ENCODE measurements at regions of chr13 and their contacts with region 1.

Region 1: DNA sequence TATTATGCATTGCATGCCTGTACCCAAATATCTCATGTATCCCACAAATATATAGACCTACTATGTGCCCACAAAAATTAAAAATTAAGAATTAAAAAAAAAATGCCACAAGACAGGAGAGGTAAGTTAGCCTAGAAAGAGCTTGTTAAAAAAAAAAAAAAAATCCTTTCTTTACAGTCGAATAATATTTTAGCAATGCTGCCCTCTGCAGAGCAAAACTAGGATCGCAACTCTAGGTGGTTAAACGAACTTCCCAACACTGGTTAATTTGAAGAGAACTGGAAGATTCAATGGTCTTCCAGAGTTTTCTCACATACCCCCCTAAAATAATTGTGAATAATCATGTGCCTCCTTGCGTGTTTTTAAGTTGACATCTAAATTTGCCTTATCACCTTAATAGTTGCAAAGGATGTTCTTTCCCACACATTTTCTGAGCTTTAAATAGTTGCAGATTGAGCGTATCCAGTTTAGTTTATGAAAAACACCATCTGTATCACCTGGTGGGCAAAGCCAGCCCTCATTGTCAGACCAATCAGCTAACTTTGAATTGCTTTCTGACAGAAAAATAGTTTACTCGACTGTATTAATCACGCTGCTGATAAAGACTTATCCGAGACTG is 47.4 kb upstream of the RCBTB2 start:
- DNase-seq: peak; percentile 60
- H3K4me3 ChIP-seq: no peak overlapping the region
- H3K27ac ChIP-seq: peak overlapping the region; percentile 52
- H3K4me1 ChIP-seq: peaks cover 34% of the 10 kb centered on the region
- H3K27me3 ChIP-seq: no peaks in the 10 kb centered on the region
- CTCF ChIP-seq: peak; percentile 83

Region 2: GRCh38 chr13:47764817-47765216 is 815.5 kb before region 1 on chr13:
- intact Hi-C with region 1: no loop called
- DNase-seq: no peak
- H3K4me3 ChIP-seq: no peak overlapping the region
- H3K27ac ChIP-seq: no peak overlapping the region
- H3K4me1 ChIP-seq: no peaks in the 10 kb centered on the region
- H3K27me3 ChIP-seq: no peaks in the 10 kb centered on the region
- CTCF ChIP-seq: no peak

Region 3: GRCh38 chr13:48110931-48111721 is 469.2 kb before region 1 on chr13:
- intact Hi-C with region 1: loop called (anchors 10 kb)
- DNase-seq: peak; percentile 52
- H3K4me3 ChIP-seq: peak overlapping the region; percentile 26
- H3K27ac ChIP-seq: peak overlapping the region; percentile 83
- H3K4me1 ChIP-seq: peaks cover 53% of the 10 kb centered on the region
- H3K27me3 ChIP-seq: no peaks in the 10 kb centered on the region
- CTCF ChIP-seq: no peak

Region 4: DNA sequence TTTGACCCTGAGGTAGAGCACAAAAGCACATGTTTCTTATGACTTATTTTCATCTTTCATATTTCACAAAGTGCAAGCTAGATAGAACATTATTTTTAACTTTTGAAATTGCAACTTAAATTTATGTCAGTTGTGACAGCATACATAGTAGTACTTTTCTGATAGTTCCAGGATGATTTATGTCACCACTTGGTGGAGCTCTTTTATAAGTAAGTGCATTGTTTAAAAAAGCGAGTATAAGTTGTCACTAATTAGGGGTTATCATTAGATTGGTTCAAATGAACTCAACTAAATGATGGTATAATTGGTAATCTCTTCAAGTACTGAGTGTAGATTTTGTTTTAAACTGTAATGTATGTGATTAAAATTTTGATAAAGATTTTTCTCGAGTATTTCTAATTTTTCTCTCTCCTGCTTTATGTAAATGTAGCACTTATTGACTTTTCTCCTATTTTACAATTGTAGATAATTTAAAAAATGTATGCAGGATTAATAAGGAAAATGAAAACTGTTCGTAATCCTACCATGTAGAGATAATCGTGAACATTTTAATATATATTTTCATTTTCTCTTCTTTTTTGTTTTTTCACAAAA is 245.7 kb before region 1 on chr13:
- intact Hi-C with region 1: loop called (anchors 5 kb)
- DNase-seq: no peak
- H3K4me3 ChIP-seq: no peak overlapping the region
- H3K27ac ChIP-seq: no peak overlapping the region
- H3K4me1 ChIP-seq: peaks cover 6% of the 10 kb centered on the region
- H3K27me3 ChIP-seq: no peaks in the 10 kb centered on the region
- CTCF ChIP-seq: peak; percentile 78

Region 5: GRCh38 chr13:48400850-48401291 is 179.4 kb before region 1 on chr13:
- intact Hi-C with region 1: loop called (anchors 10 kb)
- DNase-seq: no peak
- H3K4me3 ChIP-seq: peak overlapping the region; percentile 29
- H3K27ac ChIP-seq: peak overlapping the region; percentile 86
- H3K4me1 ChIP-seq: peaks cover 68% of the 10 kb centered on the region
- H3K27me3 ChIP-seq: no peaks in the 10 kb centered on the region
- CTCF ChIP-seq: no peak

Region 6: DNA sequence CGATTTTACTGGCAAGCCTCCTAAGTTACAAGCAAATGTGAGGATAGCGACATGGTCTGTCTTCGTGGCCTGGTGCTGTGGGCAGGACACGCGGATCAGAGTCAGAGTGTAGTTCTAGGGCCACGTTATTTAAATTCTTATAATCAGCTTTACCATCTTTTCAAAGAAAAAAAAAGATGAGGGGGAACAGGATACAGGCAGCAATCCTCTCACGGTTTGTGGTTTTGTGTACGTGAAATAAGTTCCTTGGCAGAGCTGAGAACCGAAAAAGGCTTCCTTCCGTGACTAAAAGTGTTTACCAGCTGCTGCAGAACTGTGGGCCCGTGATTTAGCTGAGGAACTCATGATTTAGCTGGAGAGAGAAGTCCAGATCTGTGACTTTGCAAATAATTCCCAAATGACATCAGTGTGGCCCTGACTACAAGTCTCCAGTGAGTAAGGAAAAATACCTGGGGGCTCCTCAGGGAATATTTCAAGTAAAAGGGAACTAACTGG is 74.7 kb before region 1 on chr13:
- intact Hi-C with region 1: loop called (anchors 10 kb)
- DNase-seq: no peak
- H3K4me3 ChIP-seq: peak overlapping the region; percentile 24
- H3K27ac ChIP-seq: peak overlapping the region; percentile 83
- H3K4me1 ChIP-seq: peaks cover 40% of the 10 kb centered on the region
- H3K27me3 ChIP-seq: no peaks in the 10 kb centered on the region
- CTCF ChIP-seq: no peak

Region 7: DNA sequence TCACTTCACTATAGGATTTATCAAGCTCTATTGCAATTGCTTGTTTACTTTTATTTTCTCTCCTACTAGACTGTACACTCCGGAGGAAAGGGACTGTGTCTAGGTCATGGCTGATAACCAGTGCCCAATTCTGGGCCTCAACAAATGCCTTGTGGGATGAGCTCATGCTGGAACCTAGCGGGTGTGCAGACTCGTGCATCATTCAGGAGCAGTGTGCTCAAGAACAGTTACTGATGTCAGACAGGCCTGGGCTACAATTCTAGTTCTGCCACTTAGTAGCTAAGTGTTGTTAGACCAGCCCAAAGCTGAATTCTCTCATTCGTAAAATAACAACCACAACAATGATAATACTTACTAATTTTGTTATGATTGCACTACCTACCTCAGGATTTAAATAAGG is 168.8 kb after region 1 on chr13:
- intact Hi-C with region 1: no loop called
- DNase-seq: no peak
- H3K4me3 ChIP-seq: no peak overlapping the region
- H3K27ac ChIP-seq: peak overlapping the region; percentile 87
- H3K4me1 ChIP-seq: peaks cover 31% of the 10 kb centered on the region
- H3K27me3 ChIP-seq: no peaks in the 10 kb centered on the region
- CTCF ChIP-seq: no peak